ENCODE measurements at regions of chr22 and their contacts with region 1.

Region 1: DNA sequence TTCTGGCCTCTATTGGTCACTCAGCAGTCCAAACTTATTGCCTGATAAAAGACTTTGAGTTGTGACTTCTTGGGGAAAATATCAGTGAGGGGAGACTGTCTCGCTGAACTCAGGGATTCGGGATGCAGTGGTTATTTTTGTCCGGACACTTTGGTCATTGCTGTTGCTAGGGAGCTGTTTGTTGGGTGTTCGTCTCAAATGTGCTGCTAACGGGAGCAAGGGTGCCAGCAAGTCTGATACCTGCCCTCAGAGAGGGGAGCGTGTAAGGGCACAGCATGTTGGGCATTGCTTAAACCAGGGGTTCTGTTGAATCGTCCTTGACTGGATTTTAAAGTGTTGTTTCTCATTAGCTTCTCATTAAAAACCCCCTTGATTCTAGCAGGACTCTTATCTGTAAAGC is 49.2 kb upstream of the SLC25A18 start:
- DNase-seq: no peak
- H3K4me3 ChIP-seq: no peak overlapping the region
- H3K4me3 Mint-ChIP-seq: no peak overlapping the region
- H3K27ac Mint-ChIP-seq: no peak overlapping the region
- H3K4me1 ChIP-seq: no peaks in the 10 kb centered on the region
- H3K4me1 Mint-ChIP-seq: no peaks in the 10 kb centered on the region
- H3K27me3 ChIP-seq: no peaks in the 10 kb centered on the region
- H3K27me3 Mint-ChIP-seq: peaks cover 11% of the 10 kb centered on the region
- CTCF ChIP-seq: no peak

Region 2: GRCh38 chr22:17536269-17536668 is 22.2 kb after region 1 on chr22:
- CTCF ChIA-PET with region 1: no interaction called
- POLR2A ChIA-PET with region 1: no interaction called
- intact Hi-C with region 1: loop called (anchors 1 kb)
- DNase-seq: no peak
- H3K4me3 ChIP-seq: no peak overlapping the region
- H3K4me3 Mint-ChIP-seq: no peak overlapping the region
- H3K27ac Mint-ChIP-seq: no peak overlapping the region
- H3K4me1 ChIP-seq: peaks cover 27% of the 10 kb centered on the region
- H3K4me1 Mint-ChIP-seq: peaks cover 15% of the 10 kb centered on the region
- H3K27me3 ChIP-seq: no peaks in the 10 kb centered on the region
- H3K27me3 Mint-ChIP-seq: no peaks in the 10 kb centered on the region
- CTCF ChIP-seq: no peak

Region 3: GRCh38 chr22:17764036-17764435 is 250.0 kb after region 1 on chr22:
- CTCF ChIA-PET with region 1: no interaction called
- POLR2A ChIA-PET with region 1: no interaction called
- intact Hi-C with region 1: no loop called
- DNase-seq: no peak
- H3K4me3 ChIP-seq: no peak overlapping the region
- H3K4me3 Mint-ChIP-seq: no peak overlapping the region
- H3K27ac Mint-ChIP-seq: no peak overlapping the region
- H3K4me1 ChIP-seq: no peaks in the 10 kb centered on the region
- H3K4me1 Mint-ChIP-seq: peaks cover 7% of the 10 kb centered on the region
- H3K27me3 ChIP-seq: no peaks in the 10 kb centered on the region
- H3K27me3 Mint-ChIP-seq: no peaks in the 10 kb centered on the region
- CTCF ChIP-seq: no peak

Region 4: GRCh38 chr22:17786435-17787161 is 272.5 kb after region 1 on chr22:
- CTCF ChIA-PET with region 1: no interaction called
- POLR2A ChIA-PET with region 1: no interaction called
- intact Hi-C with region 1: no loop called
- DNase-seq: peak; percentile 21 to 55
- H3K4me3 ChIP-seq: no peak overlapping the region
- H3K4me3 Mint-ChIP-seq: no peak overlapping the region
- H3K27ac Mint-ChIP-seq: no peak overlapping the region
- H3K4me1 ChIP-seq: peaks cover 10% of the 10 kb centered on the region
- H3K4me1 Mint-ChIP-seq: no peaks in the 10 kb centered on the region
- H3K27me3 ChIP-seq: no peaks in the 10 kb centered on the region
- H3K27me3 Mint-ChIP-seq: no peaks in the 10 kb centered on the region
- CTCF ChIP-seq: no peak

Measured in Caco-2 (cell line).